Activated naive CD8-positive, alpha-beta T cell treated with anti-CD3 and anti-CD28 coated beads, Interleukin-2, amount 10 ng/mL, durations not matched to agents 7 days and 5 days (primary cell): ENCODE measurements at regions of chr1 and their contacts with region 1.

Region 1: DNA sequence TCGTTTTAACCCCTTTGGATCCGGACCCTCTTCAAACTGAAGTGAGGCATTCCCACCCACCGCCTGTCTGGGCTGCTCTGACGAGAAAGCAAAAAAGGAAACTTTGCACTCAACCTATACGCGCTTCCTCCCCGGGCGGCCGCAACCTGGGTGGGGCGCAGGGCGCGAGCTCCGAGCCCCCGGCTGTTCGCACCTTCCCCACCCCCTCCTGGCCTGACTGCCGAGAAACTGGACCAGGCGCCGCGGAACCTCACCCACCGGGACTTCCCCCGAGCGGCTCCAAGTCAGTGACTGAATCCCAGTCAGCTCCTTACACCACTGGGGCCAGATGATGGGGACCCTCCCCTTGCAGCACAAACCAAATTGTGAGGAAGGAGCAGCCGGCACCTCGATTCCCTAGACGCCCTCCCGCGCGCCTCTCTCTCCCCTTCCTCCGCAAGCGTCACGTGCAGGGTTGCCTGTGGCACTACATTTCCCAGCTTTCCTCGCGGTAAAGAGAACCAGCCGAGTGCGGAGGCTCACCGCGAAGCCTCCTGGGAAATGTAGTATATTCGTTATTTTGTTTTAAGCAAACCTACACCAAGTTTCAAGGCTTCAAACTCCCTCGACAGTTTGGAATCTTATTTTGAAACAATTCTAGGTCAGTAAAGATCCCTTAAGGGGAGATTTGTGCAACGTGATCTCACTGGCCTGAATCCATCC is at the start of gene RAB29:
- DNase-seq: peak; percentile 83
- ATAC-seq: peak; percentile 86
- H3K4me3 Mint-ChIP-seq: peak within 1 kb of the TSS; percentile 88
- H3K27ac Mint-ChIP-seq: peak within 1 kb of the TSS; percentile 94
- H3K4me1 Mint-ChIP-seq: peaks cover 45% of the 10 kb centered on the region
- H3K27me3 Mint-ChIP-seq: no peaks in the 10 kb centered on the region
- total RNA-seq, gene RAB29: 48.5 to 50.6 TPM

Region 2: GRCh38 chr1:205631727-205632373 is 143.3 kb before region 1 on chr1 and contains the start of gene ELK4:
- POLR2A ChIA-PET with region 1: interaction called, 15 read pairs
- DNase-seq: peak; percentile 99
- ATAC-seq: peak; percentile 81
- H3K4me3 Mint-ChIP-seq: peak within 1 kb of the TSS; percentile 96
- H3K27ac Mint-ChIP-seq: peak within 1 kb of the TSS; percentile 99
- H3K4me1 Mint-ChIP-seq: peaks cover 30% of the 10 kb centered on the region
- H3K27me3 Mint-ChIP-seq: no peaks in the 10 kb centered on the region
- total RNA-seq, gene ELK4: 124 to 141 TPM

Region 3: GRCh38 chr1:205729945-205730610 is 45.1 kb before region 1 on chr1:
- POLR2A ChIA-PET with region 1: interaction called, 11 read pairs
- DNase-seq: no peak
- ATAC-seq: no peak
- H3K4me3 Mint-ChIP-seq: no peak overlapping the region
- H3K27ac Mint-ChIP-seq: no peak overlapping the region
- H3K4me1 Mint-ChIP-seq: peaks cover 16% of the 10 kb centered on the region
- H3K27me3 Mint-ChIP-seq: no peaks in the 10 kb centered on the region

Region 4: GRCh38 chr1:205750138-205751035 is 24.8 kb before region 1 on chr1 and contains the start of gene NUCKS1:
- POLR2A ChIA-PET with region 1: interaction called, 43 read pairs
- DNase-seq: peak; percentile 90
- ATAC-seq: peak; percentile 84
- H3K4me3 Mint-ChIP-seq: peak within 1 kb of the TSS; percentile 99
- H3K27ac Mint-ChIP-seq: peak within 1 kb of the TSS; percentile 100
- H3K4me1 Mint-ChIP-seq: peaks cover 37% of the 10 kb centered on the region
- H3K27me3 Mint-ChIP-seq: no peaks in the 10 kb centered on the region
- total RNA-seq, gene NUCKS1: 200 to 211 TPM